HEK293T (cell line): ENCODE measurements at regions of chr17 and their contacts with region 1.

Region 1: DNA sequence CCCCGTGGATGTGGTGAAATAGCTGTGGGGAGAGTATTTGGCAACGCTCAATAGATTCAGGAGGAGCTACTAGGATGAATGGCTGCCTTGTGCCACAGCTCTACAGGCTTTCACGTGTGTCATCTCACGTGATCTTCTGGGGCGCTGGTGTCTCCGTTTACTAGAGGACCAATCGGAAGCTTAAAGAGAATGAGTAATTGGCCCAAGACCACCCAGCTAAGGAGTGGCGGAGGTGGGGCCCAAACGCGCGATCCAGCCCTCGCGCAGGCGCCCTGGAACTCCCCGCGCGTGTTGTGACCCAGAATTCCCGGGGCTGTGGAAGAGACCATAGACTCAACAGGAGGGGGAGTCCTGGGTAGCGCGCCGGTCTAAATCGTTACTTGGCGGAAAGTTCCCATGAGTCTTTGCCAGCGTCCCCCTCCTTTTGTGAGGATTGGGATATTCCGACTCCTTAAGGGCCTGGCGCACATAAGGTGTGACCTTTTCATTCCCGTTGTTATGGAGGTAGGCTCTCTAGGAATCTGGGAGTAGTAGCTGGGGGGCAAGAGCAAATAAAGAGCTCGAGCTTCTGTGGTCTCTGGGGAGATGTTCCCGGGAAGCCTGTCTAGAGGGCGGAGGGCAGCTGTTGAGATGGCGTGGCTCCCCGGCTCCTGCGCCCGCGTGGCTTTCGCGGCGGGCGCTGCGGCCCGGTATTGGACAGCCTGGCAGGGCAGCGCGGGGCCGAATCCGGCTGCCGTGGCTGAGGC is 23.4 kb downstream of the TRPV2 start:
- DNase-seq: peak; percentile 98

Region 2: GRCh38 chr17:16353317-16354174 is 85.2 kb before region 1 on chr17 and contains the start of gene CENPV:
- CTCF ChIA-PET with region 1: no interaction called
- POLR2A ChIA-PET with region 1: interaction called, 38 read pairs
- DNase-seq: peak; percentile 81

Region 3: GRCh38 chr17:16407911-16408588 is 30.7 kb before region 1 on chr17:
- CTCF ChIA-PET with region 1: no interaction called
- POLR2A ChIA-PET with region 1: interaction called, 26 read pairs
- DNase-seq: no peak

Region 4: DNA sequence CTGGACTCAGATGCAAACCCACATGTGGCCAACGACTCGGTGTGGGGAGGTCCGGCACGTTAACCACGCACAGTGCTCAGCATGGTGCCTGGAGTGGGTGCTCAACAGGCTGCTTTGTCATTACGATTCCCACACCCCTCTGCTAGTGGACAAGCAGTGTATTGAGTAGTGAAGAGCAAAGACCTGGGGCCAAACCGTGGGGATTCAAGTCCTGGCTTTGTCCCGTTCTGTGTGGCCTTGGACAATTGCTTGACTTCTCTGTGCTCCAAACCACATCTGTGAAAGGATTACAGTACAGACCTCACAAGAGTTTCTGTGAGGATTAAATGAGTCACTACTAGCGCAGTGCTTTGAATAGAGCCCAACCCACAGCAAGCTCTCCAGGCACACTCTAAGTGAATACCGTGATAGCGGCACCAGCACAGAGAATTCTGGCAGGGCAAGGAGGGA is 10.4 kb after region 1 on chr17:
- CTCF ChIA-PET with region 1: interaction called, 27 read pairs
- POLR2A ChIA-PET with region 1: interaction called, 107 read pairs
- DNase-seq: no peak

Region 5: GRCh38 chr17:16507918-16508533 is 69.3 kb after region 1 on chr17:
- CTCF ChIA-PET with region 1: no interaction called
- POLR2A ChIA-PET with region 1: interaction called, 14 read pairs
- DNase-seq: no peak

Region 6: DNA sequence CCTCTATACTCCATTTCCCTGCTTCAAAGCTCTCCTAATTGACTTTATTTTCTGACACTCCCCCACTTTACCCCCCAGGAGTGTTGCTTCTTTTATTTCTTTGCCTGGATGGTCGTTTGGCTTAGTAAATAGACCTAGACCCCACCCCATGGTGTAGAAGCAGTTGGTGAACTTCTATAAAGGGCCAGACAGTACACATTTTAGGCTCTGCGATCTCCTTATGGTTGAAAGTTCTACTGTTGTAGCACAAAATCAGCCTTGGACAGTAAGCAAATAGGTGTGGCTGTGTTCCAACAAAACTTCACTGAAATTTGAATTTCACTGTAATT is 98.4 kb after region 1 on chr17:
- CTCF ChIA-PET with region 1: no interaction called
- POLR2A ChIA-PET with region 1: interaction called, 25 read pairs
- DNase-seq: no peak